ENCODE measurements at regions of chr19 and their contacts with region 1.

Region 1: DNA sequence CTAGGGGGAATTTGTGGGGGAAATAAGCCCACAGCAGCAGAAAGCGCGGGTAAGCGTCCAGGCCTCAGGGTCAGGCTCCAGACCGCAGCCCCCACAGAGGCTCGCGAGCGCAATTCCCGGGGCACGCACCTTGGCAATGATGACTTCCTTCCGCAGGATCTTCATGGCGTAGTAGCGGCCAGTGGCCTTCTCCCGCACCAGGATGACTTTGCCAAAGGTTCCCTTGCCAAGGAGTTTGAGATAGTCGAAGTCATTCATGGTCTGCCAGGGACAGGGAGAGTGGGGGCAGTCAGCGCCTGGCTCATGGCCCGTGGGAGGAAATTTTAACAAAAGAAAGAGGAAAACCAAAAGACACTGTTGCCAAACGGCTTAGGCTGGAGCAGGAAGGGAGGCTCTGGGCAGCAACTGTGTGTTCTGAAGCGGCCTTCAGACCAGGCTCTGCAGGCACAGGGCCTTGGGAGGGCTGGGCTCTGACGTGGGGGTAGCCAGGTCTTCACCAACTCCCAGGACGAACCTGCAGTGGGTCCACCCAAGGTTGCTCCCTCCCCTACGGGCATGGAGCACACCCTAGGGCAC is 15.4 kb upstream of the CCNP start:
- DNase-seq: peak; percentile 72 to 86 (median 82)
- H3K4me3 ChIP-seq: no peak overlapping the region
- H3K27ac ChIP-seq: peak overlapping the region in 1 of 2 donors; percentile 59
- H3K4me1 ChIP-seq: peaks cover 10% of the 10 kb centered on the region
- H3K27me3 ChIP-seq: no peaks in the 10 kb centered on the region
- CTCF ChIP-seq: no peak
- EP300 ChIP-seq: no peak
- POLR2A ChIP-seq: no peak

Region 2: GRCh38 chr19:40273469-40274360 is 31.8 kb after region 1 on chr19:
- intact Hi-C with region 1: loop called in 1 of 4 experiments (anchors 2 kb)
- DNase-seq: no peak
- H3K4me3 ChIP-seq: no peak overlapping the region
- H3K27ac ChIP-seq: no peak overlapping the region
- H3K4me1 ChIP-seq: peaks cover 30% of the 10 kb centered on the region
- H3K27me3 ChIP-seq: no peaks in the 10 kb centered on the region
- CTCF ChIP-seq: no peak
- EP300 ChIP-seq: no peak
- POLR2A ChIP-seq: no peak

Measured in ovary (tissue), 10 donors.